WTC11 (cell line): ENCODE measurements at regions of chr19 and their contacts with region 1.

Region 1: GRCh38 chr19:48965806-48966540 is 864 bp downstream of the FTL start:
- DNase-seq: peak; percentile 91
- ATAC-seq: peak; percentile 16
- H3K4me3 Mint-ChIP-seq: peak overlapping the region; percentile 99
- H3K27ac Mint-ChIP-seq: peak overlapping the region; percentile 93
- H3K4me1 Mint-ChIP-seq: peaks cover 37% of the 10 kb centered on the region
- H3K27me3 Mint-ChIP-seq: no peaks in the 10 kb centered on the region
- CTCF ChIP-seq: no peak

Region 2: DNA sequence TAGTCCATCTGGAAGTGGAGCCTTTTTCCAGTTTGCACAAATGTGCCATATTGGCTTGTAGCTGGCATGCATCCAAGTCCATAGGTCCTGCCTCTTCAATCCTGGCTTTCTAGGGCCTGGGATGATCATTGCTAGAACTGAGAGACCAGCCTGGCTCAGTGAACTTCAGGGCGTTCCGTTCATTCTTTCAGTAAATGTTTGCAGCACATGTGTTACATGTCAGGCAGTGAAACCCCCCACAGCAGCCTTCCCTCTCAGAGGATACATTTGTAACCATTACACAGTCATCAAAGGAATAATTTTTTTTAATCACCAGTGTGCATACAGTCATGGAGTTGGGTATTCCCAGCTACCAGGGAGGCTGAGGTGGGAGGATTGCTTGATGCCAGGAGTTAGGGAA is 260.5 kb before region 1 on chr19:
- CTCF ChIA-PET with region 1: no interaction called
- POLR2A ChIA-PET with region 1: no interaction called
- DNase-seq: no peak
- ATAC-seq: no peak
- H3K4me3 Mint-ChIP-seq: no peak overlapping the region
- H3K27ac Mint-ChIP-seq: no peak overlapping the region
- H3K4me1 Mint-ChIP-seq: peaks cover 9% of the 10 kb centered on the region
- H3K27me3 Mint-ChIP-seq: no peaks in the 10 kb centered on the region
- CTCF ChIP-seq: no peak

Region 3: GRCh38 chr19:48795055-48795684 is 170.8 kb before region 1 on chr19:
- CTCF ChIA-PET with region 1: interaction called, 21 read pairs
- POLR2A ChIA-PET with region 1: no interaction called
- DNase-seq: peak; percentile 94
- ATAC-seq: peak; percentile 96
- H3K4me3 Mint-ChIP-seq: peak overlapping the region; percentile 96
- H3K27ac Mint-ChIP-seq: peak overlapping the region; percentile 98
- H3K4me1 Mint-ChIP-seq: peaks cover 18% of the 10 kb centered on the region
- H3K27me3 Mint-ChIP-seq: no peaks in the 10 kb centered on the region; the same call in none of the 2 replicates
- CTCF ChIP-seq: peak; percentile 92

Region 4: GRCh38 chr19:48872182-48872883 is 93.6 kb before region 1 on chr19 and contains the start of gene PPP1R15A:
- CTCF ChIA-PET with region 1: interaction called, 11 read pairs
- POLR2A ChIA-PET with region 1: interaction called, 3 read pairs
- DNase-seq: peak; percentile 99
- ATAC-seq: peak; percentile 73
- H3K4me3 Mint-ChIP-seq: peak within 1 kb of the TSS; percentile 100
- H3K27ac Mint-ChIP-seq: peak within 1 kb of the TSS; percentile 100
- H3K4me1 Mint-ChIP-seq: peaks cover 33% of the 10 kb centered on the region
- H3K27me3 Mint-ChIP-seq: no peaks in the 10 kb centered on the region
- CTCF ChIP-seq: no peak
- total RNA-seq, gene PPP1R15A: 17.0 to 19.5 TPM (median 17.9 TPM) in 3 replicates

Region 5: DNA sequence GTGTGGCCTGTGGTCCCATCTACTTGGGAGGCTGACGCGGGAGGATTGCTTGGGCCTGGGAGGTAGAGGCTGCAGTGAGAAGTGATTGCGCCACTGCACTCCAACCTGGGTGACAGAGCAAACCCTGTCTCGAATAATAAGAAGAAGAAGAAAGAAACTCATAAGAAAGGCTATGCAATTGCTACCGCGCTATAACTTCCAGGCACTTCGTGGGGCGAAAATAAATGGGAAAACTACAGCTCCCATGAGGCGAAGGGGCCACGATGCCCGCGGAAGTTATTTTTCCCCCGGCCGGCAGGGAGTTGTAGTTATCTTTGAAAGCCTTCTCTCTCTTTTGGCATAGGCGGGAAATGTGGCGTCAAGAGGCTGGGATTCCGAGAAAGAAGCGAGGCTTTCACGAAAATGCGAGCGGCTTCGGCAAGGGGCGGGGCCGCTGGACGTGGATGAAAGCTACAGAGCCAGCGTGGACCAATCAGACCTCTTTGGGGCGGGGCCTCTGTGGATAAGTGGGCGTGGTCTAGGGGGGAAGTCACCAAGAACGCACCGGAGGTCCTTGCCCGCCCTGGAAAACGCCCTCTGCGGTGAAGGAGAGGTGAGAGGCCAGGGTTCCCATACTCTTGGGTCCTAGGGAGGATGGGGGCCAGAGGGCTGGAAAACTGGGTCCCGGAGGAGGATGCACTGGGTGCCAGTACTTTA is 66.0 kb before region 1 on chr19 and contains the start of gene NUCB1:
- CTCF ChIA-PET with region 1: interaction called, 15 read pairs
- POLR2A ChIA-PET with region 1: interaction called, 5 read pairs
- DNase-seq: peak; percentile 100
- ATAC-seq: peak; percentile 87
- H3K4me3 Mint-ChIP-seq: peak within 1 kb of the TSS; percentile 97
- H3K27ac Mint-ChIP-seq: peak within 1 kb of the TSS; percentile 99
- H3K4me1 Mint-ChIP-seq: peaks cover 11% of the 10 kb centered on the region
- H3K27me3 Mint-ChIP-seq: peaks cover 9% of the 10 kb centered on the region
- CTCF ChIP-seq: no peak
- total RNA-seq, gene NUCB1: 145 to 153 TPM (median 149 TPM) in 3 replicates

Region 6: GRCh38 chr19:48933382-48933932 is 32.5 kb before region 1 on chr19 and contains the start of gene DHDH:
- CTCF ChIA-PET with region 1: interaction called, 33 read pairs
- POLR2A ChIA-PET with region 1: interaction called, 3 read pairs
- DNase-seq: peak; percentile 98
- ATAC-seq: peak; percentile 94
- H3K4me3 Mint-ChIP-seq: peak within 1 kb of the TSS; percentile 87
- H3K27ac Mint-ChIP-seq: peak within 1 kb of the TSS; percentile 34
- H3K4me1 Mint-ChIP-seq: peaks cover 17% of the 10 kb centered on the region
- H3K27me3 Mint-ChIP-seq: peaks cover 53% of the 10 kb centered on the region
- CTCF ChIP-seq: no peak
- total RNA-seq, gene DHDH: 3.0 to 3.4 TPM (median 3.1 TPM) in 3 replicates

Region 7: GRCh38 chr19:48954595-48955310 is 11.2 kb before region 1 on chr19 and contains the start of gene BAX:
- CTCF ChIA-PET with region 1: interaction called, 11 read pairs
- POLR2A ChIA-PET with region 1: interaction called, 4 read pairs
- DNase-seq: peak; percentile 99
- ATAC-seq: peak; percentile 81
- H3K4me3 Mint-ChIP-seq: peak within 1 kb of the TSS; percentile 86
- H3K27ac Mint-ChIP-seq: peak within 1 kb of the TSS; percentile 96
- H3K4me1 Mint-ChIP-seq: peaks cover 18% of the 10 kb centered on the region
- H3K27me3 Mint-ChIP-seq: peaks cover 15% of the 10 kb centered on the region
- CTCF ChIP-seq: no peak
- total RNA-seq, gene BAX: 346 to 387 TPM (median 351 TPM) in 3 replicates

Region 8: DNA sequence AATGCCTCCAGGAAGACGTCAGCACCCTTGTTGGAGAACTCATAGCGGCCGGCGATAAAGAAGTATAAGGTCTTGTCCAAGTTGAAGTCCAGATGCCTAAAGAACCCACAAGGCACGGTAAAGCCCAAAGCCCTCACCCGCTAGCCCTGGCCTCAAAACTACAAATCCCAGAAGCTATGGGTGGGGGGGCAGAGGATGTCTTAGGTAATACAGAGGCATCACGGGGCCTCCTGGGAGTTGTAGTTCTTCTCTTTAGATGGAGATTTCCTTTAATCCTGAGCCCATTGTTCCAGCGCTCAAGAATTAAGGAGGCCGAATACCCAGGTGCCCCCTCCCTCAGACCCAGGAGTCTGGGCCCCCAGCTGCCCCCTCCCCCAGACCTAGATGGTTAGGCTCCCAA is 16.3 kb after region 1 on chr19:
- CTCF ChIA-PET with region 1: interaction called, 33 read pairs
- POLR2A ChIA-PET with region 1: no interaction called
- DNase-seq: no peak
- ATAC-seq: peak; percentile 49
- H3K4me3 Mint-ChIP-seq: no peak overlapping the region
- H3K27ac Mint-ChIP-seq: no peak overlapping the region
- H3K4me1 Mint-ChIP-seq: no peaks in the 10 kb centered on the region
- H3K27me3 Mint-ChIP-seq: no peaks in the 10 kb centered on the region
- CTCF ChIP-seq: no peak